ENCODE measurements at regions of chr16 and their contacts with region 1.

Region 1: DNA sequence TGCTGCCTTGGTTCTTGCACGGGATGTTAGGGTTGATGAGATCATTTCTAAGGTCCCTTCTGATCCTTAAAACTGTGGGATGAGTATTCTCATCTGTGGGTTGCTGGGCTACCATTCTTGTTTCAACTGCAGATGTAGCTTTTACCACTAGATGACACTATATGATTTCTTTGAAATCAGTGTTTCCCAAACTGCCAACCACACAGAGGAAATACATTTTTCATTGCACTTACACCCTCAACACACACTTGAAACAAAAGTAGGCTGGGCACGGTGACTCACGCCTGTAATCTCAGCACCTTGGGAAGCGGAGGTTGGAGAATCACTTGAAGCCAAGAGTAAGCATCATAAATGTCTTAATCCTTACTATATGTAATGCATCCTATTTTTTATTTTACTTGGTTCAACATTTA is 15.3 kb downstream of the LCMT1 start:
- ATAC-seq: peak in 5 of 8 experiments; percentile 22 to 90 (median 77)
- H3K4me3 ChIP-seq: no peak overlapping the region
- H3K27ac ChIP-seq: no peak overlapping the region
- H3K4me1 ChIP-seq: no peaks in the 10 kb centered on the region

Region 2: DNA sequence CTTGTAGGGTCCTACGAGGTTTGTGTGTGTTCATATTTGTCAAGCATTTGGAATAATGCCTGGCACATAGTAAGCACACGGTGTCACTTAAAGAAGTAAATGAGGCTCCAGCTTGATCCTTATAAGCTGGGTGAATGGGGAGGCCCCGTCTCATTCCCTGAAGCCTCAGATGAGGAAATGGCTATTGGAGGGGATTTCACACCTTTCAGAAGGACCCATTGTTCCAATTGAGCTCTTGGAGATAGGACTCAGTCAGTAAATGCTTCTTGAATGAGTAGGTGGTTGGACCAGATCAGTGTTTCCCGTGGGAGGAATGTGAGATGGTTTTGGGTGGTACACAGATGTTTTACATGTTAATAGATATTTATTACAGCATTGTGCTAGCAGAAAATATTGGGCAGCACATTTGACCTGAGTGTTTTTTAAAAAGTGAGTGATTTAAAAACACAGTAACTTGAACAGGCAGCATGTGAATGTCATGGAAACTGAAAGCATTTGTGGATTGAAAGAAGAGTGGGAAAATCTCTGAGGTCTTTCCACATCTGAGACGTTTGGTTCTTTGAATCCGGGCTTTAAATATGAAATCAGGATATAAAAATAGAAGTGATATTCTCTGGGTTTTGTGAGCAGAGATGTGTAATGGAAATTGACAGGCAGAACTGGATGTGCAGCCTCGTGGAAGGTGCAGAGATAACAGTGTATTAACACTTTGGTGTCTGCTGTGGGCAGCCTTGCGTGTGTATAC is 75.2 kb before region 1 on chr16:
- in situ Hi-C with region 1: loop called in 2 of 9 experiments (anchors 5 to 10 kb)
- ATAC-seq: no peak
- H3K4me3 ChIP-seq: no peak overlapping the region
- H3K27ac ChIP-seq: no peak overlapping the region
- H3K4me1 ChIP-seq: no peaks in the 10 kb centered on the region

Region 3: DNA sequence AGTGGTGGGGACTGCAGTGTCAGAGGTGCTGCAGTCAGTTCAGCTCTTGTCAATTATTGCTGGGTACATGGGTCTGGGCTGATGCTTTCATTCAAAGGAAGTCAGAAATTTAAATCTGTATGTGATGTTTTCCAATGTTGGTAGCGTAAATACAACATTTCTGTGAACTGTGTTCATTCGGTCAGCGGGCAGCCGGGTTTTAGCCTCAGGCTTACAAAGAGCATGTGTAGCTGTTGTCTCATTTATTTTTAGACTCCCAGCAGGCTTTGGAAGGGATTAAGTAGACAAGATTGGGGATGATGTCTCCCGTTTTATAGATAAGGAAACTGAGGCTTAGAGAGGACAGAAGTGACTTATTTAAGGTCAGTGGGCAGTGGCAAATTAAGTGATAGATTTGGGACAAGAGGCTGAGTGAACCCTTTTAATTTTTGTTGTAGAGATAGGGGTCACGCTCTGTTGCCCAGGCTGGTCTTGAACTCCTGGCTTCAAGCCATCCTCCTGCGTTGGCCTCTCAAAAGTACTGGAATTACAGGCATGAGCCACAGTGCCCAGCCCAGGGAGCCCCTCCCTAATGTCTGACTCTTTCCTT is 98.0 kb after region 1 on chr16:
- in situ Hi-C with region 1: loop called in 2 of 9 experiments (anchors 10 to 25 kb)
- ATAC-seq: no peak
- H3K4me3 ChIP-seq: no peak overlapping the region
- H3K27ac ChIP-seq: no peak overlapping the region
- H3K4me1 ChIP-seq: no peaks in the 10 kb centered on the region

Region 4: DNA sequence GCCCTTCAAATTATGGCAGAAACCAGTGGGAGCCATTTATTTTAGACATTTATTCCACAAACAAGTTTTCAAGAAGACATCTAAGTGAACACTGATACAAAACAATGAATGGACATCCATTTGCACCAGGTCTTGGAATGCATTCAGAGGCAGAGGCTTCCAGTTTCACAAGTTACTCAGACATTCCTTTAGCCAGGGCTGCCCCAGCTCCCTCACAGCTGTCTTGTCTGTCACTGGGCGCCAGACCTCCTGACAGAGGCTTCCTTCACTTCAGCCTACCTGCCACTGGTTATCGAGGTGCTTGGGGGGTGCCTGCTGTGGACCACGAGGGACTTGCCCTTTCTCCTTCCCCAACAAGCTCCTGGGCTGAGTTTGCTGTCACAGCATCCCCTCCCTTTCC is 109.2 kb after region 1 on chr16:
- in situ Hi-C with region 1: loop called in 1 of 9 experiments (anchors 25 kb)
- ATAC-seq: no peak
- H3K4me3 ChIP-seq: no peak overlapping the region
- H3K27ac ChIP-seq: no peak overlapping the region
- H3K4me1 ChIP-seq: no peaks in the 10 kb centered on the region